Naive thymus-derived CD8-positive, alpha-beta T cell (primary cell): ENCODE measurements at regions of chr12 and their contacts with region 1.

Region 1: DNA sequence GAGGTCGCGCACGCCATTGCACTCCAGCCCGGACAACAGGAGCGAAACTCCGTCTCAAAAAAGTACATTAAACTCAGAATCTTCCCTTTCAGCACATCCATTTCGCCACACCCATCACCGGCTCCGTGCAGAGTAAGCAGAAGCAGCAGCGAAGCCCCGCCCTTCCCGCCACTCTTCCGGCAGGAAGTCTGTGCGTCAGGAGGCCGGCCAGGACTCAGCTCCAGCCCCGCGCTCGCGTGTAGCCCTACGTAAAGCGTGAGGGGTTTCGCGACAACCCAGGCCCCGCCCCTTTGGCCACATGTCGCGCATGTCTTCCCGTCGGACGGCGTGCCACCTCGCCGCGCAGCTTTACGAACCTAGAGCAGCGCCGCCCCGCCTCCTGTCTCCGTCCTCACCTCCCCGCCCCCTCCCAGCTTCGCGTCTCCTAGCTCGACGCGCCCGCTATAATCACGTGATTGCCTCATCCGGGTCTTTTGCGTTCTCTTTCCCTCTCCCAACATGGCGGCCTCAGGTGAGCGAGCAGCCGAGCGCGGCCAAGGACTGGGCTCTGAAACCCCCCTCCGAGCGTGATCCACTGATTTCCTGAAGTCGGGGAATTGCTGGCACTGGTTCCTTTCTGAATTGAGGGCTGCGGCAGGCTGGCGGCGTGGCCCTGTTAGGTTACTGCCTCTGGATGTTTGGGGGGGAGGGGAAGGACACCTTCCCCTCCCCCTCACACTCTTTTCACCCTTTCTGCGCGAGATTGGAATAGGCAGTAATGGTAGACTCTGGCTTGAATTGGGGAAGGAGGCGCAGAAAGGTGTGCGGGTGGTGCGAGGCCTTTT is at the start of gene EIF4B:
- DNase-seq: peak; percentile 95 to 100 (median 99)
- ATAC-seq: peak; percentile 91 to 93
- H3K4me3 Mint-ChIP-seq: peak within 1 kb of the TSS; percentile 96 to 100 (median 98)
- H3K27ac Mint-ChIP-seq: peak within 1 kb of the TSS; percentile 96 to 99 (median 99)
- H3K4me1 Mint-ChIP-seq: peaks cover 20 to 56% (median 51%) of the 10 kb centered on the region in 4 donors
- H3K27me3 Mint-ChIP-seq: peaks cover 0 to 3% (median 0%) of the 10 kb centered on the region in 5 donors
- polyA plus RNA-seq, gene EIF4B: 116 to 146 (median 124) TPM

Region 2: DNA sequence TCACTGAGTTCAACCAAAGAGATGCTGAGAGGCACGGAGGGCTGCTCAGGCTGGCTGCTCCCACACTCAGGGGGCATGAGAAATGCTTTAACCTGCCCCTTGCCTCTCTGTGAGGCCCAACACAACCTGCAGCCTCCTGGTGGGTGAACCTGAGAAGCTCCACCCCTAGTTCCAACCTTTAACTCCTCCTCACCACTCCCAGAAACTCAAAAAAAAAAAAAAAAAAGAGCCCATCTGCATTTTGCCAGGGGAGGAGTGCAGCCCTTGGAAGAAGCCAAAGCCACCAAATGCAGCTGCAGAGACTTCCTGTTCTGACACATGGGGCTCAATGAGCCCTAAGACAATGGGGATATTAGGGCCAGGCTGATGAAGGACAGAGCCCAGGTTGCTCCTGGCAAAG is 201.2 kb before region 1 on chr12:
- POLR2A ChIA-PET with region 1: no interaction called
- DNase-seq: no peak
- ATAC-seq: no peak
- H3K4me3 Mint-ChIP-seq: no peak overlapping the region
- H3K27ac Mint-ChIP-seq: peak overlapping the region in 2 of 10 donors; percentile 35 to 47
- H3K4me1 Mint-ChIP-seq: peaks cover 0 to 6% (median 0%) of the 10 kb centered on the region in 4 donors
- H3K27me3 Mint-ChIP-seq: peaks cover 0 to 10% (median 2%) of the 10 kb centered on the region in 5 donors

Region 3: DNA sequence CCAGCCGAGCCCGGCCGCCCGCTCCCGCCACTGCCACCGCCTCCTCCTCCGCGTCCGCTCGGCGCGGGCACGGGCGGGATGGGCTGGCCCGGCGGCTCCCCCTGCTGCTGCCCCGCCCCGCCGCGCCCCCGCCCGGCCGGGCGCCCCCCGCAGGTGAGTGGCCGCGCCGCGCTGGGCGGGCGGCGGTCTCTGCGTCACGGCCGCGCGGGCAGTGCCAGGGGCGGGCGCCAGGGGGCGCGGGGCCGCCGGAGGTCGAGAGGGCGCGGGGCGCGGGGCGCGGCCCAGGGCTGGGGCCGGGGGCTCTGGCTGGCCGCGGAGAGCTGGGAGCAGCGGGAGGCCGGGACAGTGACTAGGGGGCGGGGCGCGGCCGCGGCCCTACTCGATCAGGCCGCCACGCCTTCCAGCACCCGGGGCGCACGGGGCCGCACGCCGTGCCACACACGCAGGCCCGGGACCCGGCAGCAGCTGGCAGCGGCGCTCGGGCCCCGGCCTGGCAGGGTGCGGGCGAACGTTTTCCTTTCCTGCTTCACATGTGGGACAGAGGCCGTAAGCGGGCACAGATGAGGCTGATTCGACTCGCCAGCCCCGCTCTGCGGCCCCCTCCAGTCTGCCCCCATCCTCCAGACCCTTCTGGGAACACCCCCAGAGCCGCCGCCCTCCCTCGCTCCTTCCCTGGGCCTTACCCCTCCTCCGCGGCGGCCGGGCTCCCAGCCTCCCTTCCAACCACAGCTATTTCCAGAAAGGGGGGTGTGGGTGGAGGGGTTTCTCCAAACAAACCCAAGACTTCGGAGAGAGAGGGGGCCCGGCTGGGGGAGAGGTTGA is 41.2 kb after region 1 on chr12:
- POLR2A ChIA-PET with region 1: interaction called, 15 read pairs
- DNase-seq: peak; percentile 53 to 80 (median 72)
- ATAC-seq: peak; percentile 75 to 79
- H3K4me3 Mint-ChIP-seq: peak overlapping the region; percentile 26 to 90 (median 62)
- H3K27ac Mint-ChIP-seq: peak overlapping the region in 9 of 10 donors; percentile 37 to 90 (median 56)
- H3K4me1 Mint-ChIP-seq: peaks cover 2 to 24% (median 20%) of the 10 kb centered on the region in 4 donors
- H3K27me3 Mint-ChIP-seq: no peaks in the 10 kb centered on the region